ENCODE measurements at regions of chr3 and their contacts with region 1.

Region 1: DNA sequence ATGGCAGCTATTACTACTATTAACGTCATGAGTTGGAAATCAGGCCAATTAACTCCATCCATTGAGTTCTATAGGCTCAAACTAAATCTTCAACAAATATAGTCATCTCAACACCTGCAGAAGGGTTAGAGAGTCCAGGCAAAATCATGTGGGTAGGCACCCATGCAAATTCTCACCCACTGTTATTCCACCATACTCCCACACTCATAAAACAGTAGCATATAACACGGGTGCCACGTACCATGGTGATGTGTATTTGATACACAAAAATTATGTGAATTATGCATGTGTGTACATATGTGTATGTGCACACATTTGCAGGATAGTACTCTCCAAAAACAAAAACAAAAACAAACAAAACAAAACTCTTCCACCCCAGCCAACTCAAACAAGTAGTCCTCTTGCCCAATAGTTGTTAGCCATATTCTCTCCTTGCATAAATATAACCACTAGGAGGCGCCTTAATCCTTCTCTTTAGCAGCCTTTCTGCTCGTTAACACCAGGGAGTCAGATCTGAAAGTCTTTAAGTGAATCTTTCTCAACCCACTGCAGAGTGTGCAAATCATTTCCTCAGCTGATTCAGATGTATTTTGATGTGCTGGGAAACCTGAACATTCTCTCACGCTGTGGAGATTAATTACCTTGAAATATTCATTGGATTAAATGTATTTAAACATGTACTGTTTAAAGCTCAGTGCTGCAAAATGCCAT is 38.0 kb upstream of the COPB2 start:
- DNase-seq: peak; percentile 71
- ATAC-seq: peak; percentile 89
- H3K4me3 ChIP-seq: no peak overlapping the region
- H3K27ac ChIP-seq: no peak overlapping the region
- H3K4me1 ChIP-seq: no peaks in the 10 kb centered on the region
- H3K27me3 ChIP-seq: no peaks in the 10 kb centered on the region
- CTCF ChIP-seq: peak; percentile 86
- POLR2A ChIP-seq: no peak
- RAD21 ChIP-seq: peak; percentile 86

Region 2: DNA sequence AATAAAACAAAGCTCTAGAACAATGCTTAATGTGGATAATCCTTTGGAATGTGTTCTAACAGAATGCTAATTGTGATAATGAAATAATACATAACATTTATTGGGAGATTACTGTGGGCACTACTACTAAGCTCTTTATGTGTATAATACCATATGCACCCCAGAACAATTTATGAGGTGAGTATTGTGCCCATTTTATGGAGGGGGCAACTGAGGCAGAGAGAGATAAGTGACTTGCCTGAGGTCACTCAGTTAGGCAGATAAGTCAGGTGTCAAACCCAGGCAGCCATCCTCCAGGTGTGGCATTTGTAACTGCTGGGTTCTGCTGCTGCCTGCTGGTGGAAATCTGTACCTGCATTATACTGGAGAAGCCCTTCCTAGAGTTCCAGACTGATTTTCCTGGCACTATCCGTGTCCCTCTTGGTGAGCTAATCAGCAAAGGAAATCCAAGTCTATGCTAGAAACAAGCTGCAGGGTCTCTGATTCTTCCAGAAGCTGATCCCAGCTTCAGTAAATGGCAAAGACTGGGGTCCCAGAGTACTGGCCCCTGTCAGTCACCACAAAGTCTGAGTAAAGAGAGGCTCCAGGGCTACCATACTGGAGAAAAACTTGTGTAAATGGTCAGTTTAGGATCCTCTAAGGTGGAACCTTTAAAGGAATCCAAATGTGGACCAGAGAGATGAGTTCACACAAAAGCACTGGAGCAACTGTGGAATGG is 134.7 kb after region 1 on chr3:
- CTCF ChIA-PET with region 1: interaction called, 4 read pairs
- POLR2A ChIA-PET with region 1: no interaction called
- dilution Hi-C with region 1: no loop called
- in situ Hi-C with region 1: loop called (anchors 5 kb)
- intact Hi-C with region 1: loop called (anchors 1 kb)
- DNase-seq: peak; percentile 43
- ATAC-seq: peak; percentile 77
- H3K4me3 ChIP-seq: no peak overlapping the region
- H3K27ac ChIP-seq: no peak overlapping the region
- H3K4me1 ChIP-seq: peaks cover 3% of the 10 kb centered on the region
- H3K27me3 ChIP-seq: no peaks in the 10 kb centered on the region; the same call in 1 of the 2 replicates
- CTCF ChIP-seq: peak; percentile 70
- POLR2A ChIP-seq: no peak
- RAD21 ChIP-seq: peak; percentile 88

Region 3: DNA sequence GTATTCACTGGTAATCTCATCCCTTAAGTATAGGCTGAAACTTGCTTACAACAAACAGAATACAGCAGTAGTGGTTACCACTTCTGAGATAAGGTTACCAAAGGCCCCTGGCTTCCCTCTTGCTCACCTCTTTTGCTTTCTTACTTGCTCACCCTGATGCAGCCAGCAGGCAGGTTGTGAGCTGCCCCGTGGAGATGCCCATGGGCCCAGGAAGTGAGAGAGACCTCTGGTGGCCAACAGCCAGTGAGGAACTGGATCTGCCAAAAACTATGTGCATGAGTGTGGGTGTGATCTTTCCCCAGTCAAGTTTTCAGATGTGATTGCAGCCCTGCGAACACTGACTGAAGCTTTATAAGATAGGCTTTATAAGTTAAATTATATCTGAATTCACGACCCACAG is 201.6 kb after region 1 on chr3:
- CTCF ChIA-PET with region 1: interaction called, 3 read pairs
- POLR2A ChIA-PET with region 1: no interaction called
- dilution Hi-C with region 1: no loop called
- in situ Hi-C with region 1: no loop called
- intact Hi-C with region 1: loop called (anchors 5 kb)
- DNase-seq: peak; percentile 2
- ATAC-seq: no peak
- H3K4me3 ChIP-seq: no peak overlapping the region
- H3K27ac ChIP-seq: no peak overlapping the region
- H3K4me1 ChIP-seq: no peaks in the 10 kb centered on the region
- H3K27me3 ChIP-seq: no peaks in the 10 kb centered on the region
- CTCF ChIP-seq: peak; percentile 19; the same call in 1 of the 2 replicates
- POLR2A ChIP-seq: no peak
- RAD21 ChIP-seq: peak; percentile 22; the same call in 1 of the 2 replicates

Region 4: DNA sequence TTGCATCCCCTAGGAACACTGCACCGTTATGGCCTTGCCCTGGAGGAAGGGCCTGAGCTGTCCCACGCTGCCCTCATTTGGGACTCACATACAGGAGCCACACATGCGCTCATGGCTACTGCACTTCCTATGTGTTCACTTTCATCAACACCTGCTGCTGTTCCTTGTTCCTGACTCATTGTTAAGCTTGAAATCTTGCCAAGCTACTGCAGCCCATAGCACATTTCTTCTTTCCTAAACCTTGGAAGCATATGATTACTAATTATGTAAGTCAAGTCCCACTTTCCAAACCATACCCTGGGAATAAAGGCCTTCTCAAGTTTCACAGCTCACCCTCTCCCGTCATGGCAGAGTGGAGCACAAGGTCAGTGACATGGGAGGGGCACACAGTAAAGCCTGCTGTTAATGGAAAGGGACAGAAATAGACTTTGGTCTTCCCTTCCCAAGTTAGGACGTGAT is 815.4 kb after region 1 on chr3:
- CTCF ChIA-PET with region 1: no interaction called
- POLR2A ChIA-PET with region 1: no interaction called
- dilution Hi-C with region 1: no loop called
- in situ Hi-C with region 1: no loop called
- intact Hi-C with region 1: no loop called
- DNase-seq: no peak
- ATAC-seq: no peak
- H3K4me3 ChIP-seq: no peak overlapping the region
- H3K27ac ChIP-seq: no peak overlapping the region
- H3K4me1 ChIP-seq: no peaks in the 10 kb centered on the region
- H3K27me3 ChIP-seq: no peaks in the 10 kb centered on the region
- CTCF ChIP-seq: no peak
- POLR2A ChIP-seq: no peak
- RAD21 ChIP-seq: no peak

Measured in IMR-90 (cell line).